Posterior vena cava (tissue), 2 donors: ENCODE measurements at regions of chr18 and their contacts with region 1.

Region 1: GRCh38 chr18:50829644-50830043 is 9.8 kb upstream of the MRO start:
- DNase-seq: no peak

Region 2: GRCh38 chr18:50806208-50806616 is 23.4 kb before region 1 on chr18:
- intact Hi-C with region 1: loop called in 1 of 2 experiments (anchors 2 kb)
- DNase-seq: no peak